IMR-90 (cell line): ENCODE measurements at regions of chr16 and their contacts with region 1.

Region 1: DNA sequence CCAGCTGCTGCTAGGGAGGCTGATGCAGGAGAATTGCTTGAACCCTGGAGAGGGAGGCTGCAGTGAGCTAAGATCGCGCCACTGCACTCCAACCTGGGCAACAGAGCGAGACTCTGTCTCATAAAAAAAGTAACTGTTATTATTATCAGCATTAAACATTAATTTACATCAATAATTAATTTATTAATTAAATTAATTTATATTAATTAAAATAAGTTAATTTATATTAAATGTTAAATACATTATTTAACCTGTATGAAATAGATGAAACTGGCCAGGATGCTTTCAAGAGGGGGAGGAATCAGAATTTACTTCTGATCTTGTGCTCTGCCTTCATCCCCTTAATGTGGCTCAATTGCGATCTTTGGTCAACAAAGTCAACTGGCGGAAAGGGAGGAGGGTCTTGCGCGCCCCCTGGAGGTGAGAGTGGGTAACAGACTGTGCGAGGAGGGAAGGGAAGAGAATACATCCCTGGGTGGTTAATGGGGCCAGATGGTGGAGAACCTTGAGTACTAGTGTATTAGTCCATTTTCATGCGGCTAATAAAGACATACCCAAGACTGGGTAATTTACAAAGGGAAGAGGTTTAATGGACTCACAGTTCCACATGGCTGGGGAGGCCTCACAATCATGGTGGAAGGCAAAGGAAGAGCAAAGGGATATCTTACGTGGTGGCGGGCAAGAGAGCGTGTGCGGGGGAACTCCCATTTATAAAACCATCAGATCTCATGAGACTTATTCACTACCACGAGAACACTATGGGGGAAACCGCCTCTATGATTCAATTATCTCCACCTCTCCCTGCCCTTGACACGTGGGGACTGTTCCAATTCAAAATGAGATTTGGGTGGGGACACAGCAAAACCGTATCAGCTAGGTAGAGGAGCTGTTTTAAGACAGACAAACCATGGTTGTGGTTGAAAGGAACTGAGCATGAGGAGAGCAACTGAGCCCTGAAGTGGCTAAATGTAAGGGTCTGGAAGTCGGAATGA is 15.7 kb upstream of the CPPED1 start:
- DNase-seq: peak; percentile 36
- ATAC-seq: peak; percentile 81
- H3K4me3 ChIP-seq: no peak overlapping the region
- H3K27ac ChIP-seq: no peak overlapping the region
- H3K4me1 ChIP-seq: no peaks in the 10 kb centered on the region
- H3K27me3 ChIP-seq: no peaks in the 10 kb centered on the region
- CTCF ChIP-seq: peak; percentile 81
- POLR2A ChIP-seq: no peak
- RAD21 ChIP-seq: peak; percentile 86

Region 2: GRCh38 chr16:12455287-12455798 is 364.1 kb before region 1 on chr16:
- CTCF ChIA-PET with region 1: interaction called, 3 read pairs
- POLR2A ChIA-PET with region 1: no interaction called
- dilution Hi-C with region 1: no loop called
- in situ Hi-C with region 1: loop called (anchors 10 kb)
- intact Hi-C with region 1: loop called (anchors 1 kb)
- DNase-seq: peak; percentile 55
- ATAC-seq: peak; percentile 100
- H3K4me3 ChIP-seq: no peak overlapping the region
- H3K27ac ChIP-seq: no peak overlapping the region
- H3K4me1 ChIP-seq: no peaks in the 10 kb centered on the region
- H3K27me3 ChIP-seq: no peaks in the 10 kb centered on the region
- CTCF ChIP-seq: peak; percentile 89
- POLR2A ChIP-seq: no peak
- RAD21 ChIP-seq: peak; percentile 94

Region 3: GRCh38 chr16:12573730-12574383 is 245.6 kb before region 1 on chr16:
- CTCF ChIA-PET with region 1: no interaction called
- POLR2A ChIA-PET with region 1: no interaction called
- dilution Hi-C with region 1: no loop called
- in situ Hi-C with region 1: no loop called
- intact Hi-C with region 1: loop called (anchors 1 kb)
- DNase-seq: no peak
- ATAC-seq: no peak
- H3K4me3 ChIP-seq: no peak overlapping the region
- H3K27ac ChIP-seq: no peak overlapping the region
- H3K4me1 ChIP-seq: no peaks in the 10 kb centered on the region
- H3K27me3 ChIP-seq: no peaks in the 10 kb centered on the region
- CTCF ChIP-seq: peak; percentile 49
- POLR2A ChIP-seq: no peak
- RAD21 ChIP-seq: peak; percentile 60

Region 4: DNA sequence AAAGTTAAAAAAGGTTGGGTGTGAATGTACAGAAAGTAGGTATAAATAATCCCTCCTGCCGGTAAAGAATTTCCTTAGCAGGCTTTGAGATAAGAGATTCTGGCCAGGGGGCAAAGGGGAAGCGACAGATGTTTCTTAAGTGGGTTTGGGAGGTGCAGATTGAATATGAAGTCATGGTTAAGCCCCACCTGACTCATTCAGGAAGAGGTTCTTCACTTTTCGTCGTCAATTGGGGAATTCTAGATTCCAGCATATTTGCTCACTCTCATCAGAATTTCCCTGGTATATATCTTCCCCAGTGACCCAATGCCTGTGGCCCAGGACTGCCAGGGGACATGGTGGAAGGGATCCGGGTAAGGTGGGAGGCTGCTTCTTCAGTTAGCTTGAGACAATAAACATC is 143.6 kb before region 1 on chr16:
- CTCF ChIA-PET with region 1: no interaction called
- POLR2A ChIA-PET with region 1: no interaction called
- dilution Hi-C with region 1: no loop called
- in situ Hi-C with region 1: no loop called
- intact Hi-C with region 1: loop called (anchors 10 kb)
- DNase-seq: peak; percentile 75
- ATAC-seq: no peak
- H3K4me3 ChIP-seq: no peak overlapping the region
- H3K27ac ChIP-seq: no peak overlapping the region
- H3K4me1 ChIP-seq: no peaks in the 10 kb centered on the region; the same call in 1 of the 2 replicates
- H3K27me3 ChIP-seq: no peaks in the 10 kb centered on the region
- CTCF ChIP-seq: no peak
- POLR2A ChIP-seq: no peak
- RAD21 ChIP-seq: no peak